IMR-90 (cell line): ENCODE measurements at regions of chr10 and their contacts with region 1.

Region 1: DNA sequence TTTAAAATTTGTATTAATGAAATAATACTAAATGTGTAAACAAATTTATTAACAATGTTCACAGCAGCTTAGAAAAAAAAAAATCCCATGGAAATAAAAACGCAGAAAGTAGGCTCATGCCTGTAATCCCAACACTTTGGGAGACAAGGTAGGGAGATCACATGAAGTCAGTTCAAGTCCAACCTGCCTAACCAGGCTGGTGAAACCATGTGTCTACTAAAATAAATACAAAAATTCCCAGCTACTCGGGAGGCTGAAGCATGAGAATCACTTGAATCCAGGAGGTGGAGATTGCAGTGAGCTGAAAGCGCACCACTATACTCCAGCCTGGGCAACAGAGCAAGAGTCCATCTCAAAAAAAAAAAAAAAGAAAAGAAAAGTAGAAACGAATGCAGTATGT is 36.2 kb downstream of the LARP4B start:
- DNase-seq: no peak
- ATAC-seq: no peak
- H3K4me3 ChIP-seq: no peak overlapping the region
- H3K27ac ChIP-seq: no peak overlapping the region
- H3K4me1 ChIP-seq: no peaks in the 10 kb centered on the region; the same call in 1 of the 2 replicates
- H3K27me3 ChIP-seq: no peaks in the 10 kb centered on the region
- CTCF ChIP-seq: no peak
- POLR2A ChIP-seq: no peak
- RAD21 ChIP-seq: no peak

Region 2: GRCh38 chr10:878895-879294 is 16.4 kb before region 1 on chr10:
- CTCF ChIA-PET with region 1: interaction called, 11 read pairs
- POLR2A ChIA-PET with region 1: no interaction called
- dilution Hi-C with region 1: no loop called
- in situ Hi-C with region 1: no loop called
- intact Hi-C with region 1: no loop called
- DNase-seq: no peak
- ATAC-seq: no peak; the same call in 1 of the 2 replicates
- H3K4me3 ChIP-seq: no peak overlapping the region
- H3K27ac ChIP-seq: no peak overlapping the region
- H3K4me1 ChIP-seq: peaks cover 7% of the 10 kb centered on the region
- H3K27me3 ChIP-seq: no peaks in the 10 kb centered on the region
- CTCF ChIP-seq: no peak
- POLR2A ChIP-seq: no peak
- RAD21 ChIP-seq: no peak

Region 3: DNA sequence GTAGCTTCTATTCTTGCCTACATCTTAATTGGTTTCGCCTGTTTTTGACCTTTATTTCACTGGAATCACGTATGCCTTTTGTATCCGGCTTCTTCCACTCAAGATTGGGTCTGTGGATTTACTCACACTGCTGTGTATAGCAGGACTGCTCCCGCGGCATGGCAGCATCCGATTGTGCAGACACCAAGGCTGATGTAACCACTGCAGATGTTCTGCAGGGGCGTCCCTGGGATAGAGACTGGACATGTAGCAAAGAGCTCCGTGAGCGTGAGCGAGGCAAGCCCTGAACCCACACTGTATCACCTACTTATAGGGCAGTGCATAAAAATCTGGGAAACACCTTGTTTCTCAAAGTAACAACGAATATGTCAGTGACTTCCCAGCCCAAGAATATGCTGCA is 141.8 kb after region 1 on chr10:
- CTCF ChIA-PET with region 1: interaction called, 3 read pairs
- POLR2A ChIA-PET with region 1: interaction called, 18 read pairs
- dilution Hi-C with region 1: no loop called
- in situ Hi-C with region 1: no loop called
- intact Hi-C with region 1: no loop called
- DNase-seq: no peak
- ATAC-seq: no peak
- H3K4me3 ChIP-seq: no peak overlapping the region
- H3K27ac ChIP-seq: no peak overlapping the region
- H3K4me1 ChIP-seq: no peaks in the 10 kb centered on the region
- H3K27me3 ChIP-seq: no peaks in the 10 kb centered on the region
- CTCF ChIP-seq: no peak
- POLR2A ChIP-seq: no peak
- RAD21 ChIP-seq: no peak